K562 (cell line): ENCODE measurements at regions of chr3 and their contacts with region 1.

Region 1: GRCh38 chr3:45140141-45140784 is 5.9 kb downstream of the CDCP1 start:
- DNase-seq: no peak
- ATAC-seq: no peak
- H3K4me3 ChIP-seq: no peak overlapping the region
- H3K27ac ChIP-seq: peak overlapping the region; percentile 81; the same call in 2 of the 3 replicates
- H3K4me1 ChIP-seq: peaks cover 22 to 67% of the 10 kb centered on the region in 2 experiments
- H3K27me3 ChIP-seq: no peaks in the 10 kb centered on the region
- CTCF ChIP-seq: no peak
- EP300 ChIP-seq: no peak
- POLR2A ChIP-seq: no peak
- RAD21 ChIP-seq: no peak

Region 2: GRCh38 chr3:45043728-45044299 is 96.4 kb before region 1 on chr3:
- CTCF ChIA-PET with region 1: no interaction called
- POLR2A ChIA-PET with region 1: interaction called, 4 read pairs
- in situ Hi-C with region 1: no loop called
- intact Hi-C with region 1: loop called (anchors 2 kb)
- DNase-seq: peak; percentile 47 to 82 (median 68)
- ATAC-seq: peak; percentile 64
- H3K4me3 ChIP-seq: no peak overlapping the region
- H3K27ac ChIP-seq: peak overlapping the region; percentile 12; the same call in 1 of the 3 replicates
- H3K4me1 ChIP-seq: peaks cover 8 to 45% of the 10 kb centered on the region in 2 experiments; a peak in 4 of 5 replicates
- H3K27me3 ChIP-seq: no peaks in the 10 kb centered on the region
- CTCF ChIP-seq: peak; percentile 27 to 69 (median 34); a peak in 4 of 6 replicates
- EP300 ChIP-seq: peak; percentile 49; the same call in 1 of the 2 replicates
- POLR2A ChIP-seq: no peak
- RAD21 ChIP-seq: peak; percentile 52 to 81; a peak in 3 of 4 replicates

Region 3: DNA sequence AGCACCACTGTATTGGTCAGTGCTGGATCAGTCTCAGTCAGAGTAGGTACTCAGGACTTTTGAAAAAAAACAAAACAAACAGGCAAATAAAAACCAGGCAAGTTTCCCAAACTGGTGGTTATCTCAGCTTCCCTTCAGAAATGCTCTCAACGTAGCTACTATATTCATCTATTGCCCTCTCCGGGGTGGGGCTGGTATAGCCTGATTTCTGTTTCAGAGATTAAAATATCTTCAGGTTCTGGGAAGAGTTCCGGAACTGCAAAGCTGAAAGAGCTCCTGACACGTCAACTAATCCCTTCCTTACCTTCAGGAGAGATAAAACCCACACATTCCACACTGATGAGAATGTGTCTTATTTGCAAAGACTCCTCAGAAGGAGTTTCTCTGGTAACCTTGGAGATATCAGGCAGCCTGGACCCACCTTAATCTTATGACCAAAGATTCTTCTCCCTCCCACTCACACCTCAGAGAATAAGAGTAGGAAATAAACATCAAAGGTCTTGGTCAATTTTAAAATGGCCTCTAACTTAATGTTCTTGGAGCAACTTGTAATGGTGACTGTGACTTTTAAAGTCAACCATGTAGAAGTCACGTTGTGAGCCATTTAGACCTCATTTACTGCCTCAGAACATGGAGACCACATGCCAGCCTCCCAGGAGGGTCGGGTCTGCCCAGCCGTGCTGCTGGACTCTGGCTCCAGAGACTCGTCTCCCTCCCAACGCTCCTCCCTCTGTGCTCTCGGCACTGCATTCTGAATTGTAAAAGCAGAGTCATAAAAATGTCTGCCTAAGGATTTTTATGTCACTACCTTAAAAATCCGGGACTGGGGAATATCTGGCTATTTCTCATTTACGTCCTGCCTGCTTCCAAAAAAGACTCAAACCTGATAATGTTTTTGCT is 47.9 kb before region 1 on chr3:
- CTCF ChIA-PET with region 1: no interaction called
- POLR2A ChIA-PET with region 1: interaction called, 6 read pairs
- in situ Hi-C with region 1: no loop called
- intact Hi-C with region 1: loop called (anchors 1 kb)
- DNase-seq: peak; percentile 61 to 95 (median 77)
- ATAC-seq: peak; percentile 85
- H3K4me3 ChIP-seq: no peak overlapping the region
- H3K27ac ChIP-seq: peak overlapping the region; percentile 72
- H3K4me1 ChIP-seq: peaks cover 28 to 57% of the 10 kb centered on the region in 2 experiments
- H3K27me3 ChIP-seq: no peaks in the 10 kb centered on the region
- CTCF ChIP-seq: peak in 2 of 3 experiments; percentile 40 to 70; a peak in 4 of 6 replicates
- EP300 ChIP-seq: peak; percentile 96
- POLR2A ChIP-seq: no peak
- RAD21 ChIP-seq: peak; percentile 71 to 80

Region 4: GRCh38 chr3:45127130-45127822 is 13.0 kb before region 1 on chr3:
- CTCF ChIA-PET with region 1: no interaction called
- POLR2A ChIA-PET with region 1: interaction called, 11 read pairs
- in situ Hi-C with region 1: no loop called
- intact Hi-C with region 1: no loop called
- DNase-seq: no peak
- ATAC-seq: peak; percentile 10; the same call in 2 of the 3 replicates
- H3K4me3 ChIP-seq: no peak overlapping the region
- H3K27ac ChIP-seq: peak overlapping the region; percentile 10; the same call in 1 of the 3 replicates
- H3K4me1 ChIP-seq: peaks cover 8 to 54% of the 10 kb centered on the region in 2 experiments; a peak in 4 of 5 replicates
- H3K27me3 ChIP-seq: no peaks in the 10 kb centered on the region
- CTCF ChIP-seq: no peak
- EP300 ChIP-seq: no peak
- POLR2A ChIP-seq: no peak
- RAD21 ChIP-seq: no peak

Region 5: GRCh38 chr3:45167011-45167911 is 27.0 kb after region 1 on chr3:
- CTCF ChIA-PET with region 1: no interaction called
- POLR2A ChIA-PET with region 1: interaction called, 4 read pairs
- in situ Hi-C with region 1: no loop called
- intact Hi-C with region 1: loop called (anchors 1 kb)
- DNase-seq: peak; percentile 87 to 96 (median 88)
- ATAC-seq: peak; percentile 95
- H3K4me3 ChIP-seq: no peak overlapping the region
- H3K27ac ChIP-seq: peak overlapping the region; percentile 59
- H3K4me1 ChIP-seq: peaks cover 12 to 59% of the 10 kb centered on the region in 2 experiments
- H3K27me3 ChIP-seq: no peaks in the 10 kb centered on the region
- CTCF ChIP-seq: peak in 2 of 3 experiments; percentile 3 to 11; a peak in 1 of 6 replicates
- EP300 ChIP-seq: peak; percentile 53; the same call in 1 of the 2 replicates
- POLR2A ChIP-seq: peak; percentile 75
- RAD21 ChIP-seq: peak in 1 of 2 experiments; percentile 48; a peak in 3 of 4 replicates